ENCODE measurements at regions of chr6 and their contacts with region 1.

Region 1: GRCh38 chr6:134174672-134175198 is 122.3 kb upstream of the SLC2A12 start:
- DNase-seq: peak; percentile 95
- ATAC-seq: peak; percentile 85 to 96 (median 91)
- H3K4me3 ChIP-seq: peak overlapping the region; percentile 66 to 85 (median 78)
- H3K27ac ChIP-seq: peak overlapping the region; percentile 97 to 100 (median 98)
- H3K4me1 ChIP-seq: peaks cover 2 to 77% (median 59%) of the 10 kb centered on the region in 9 donors
- H3K27me3 ChIP-seq: no peaks in the 10 kb centered on the region
- CTCF ChIP-seq: peak in 1 of 9 donors; percentile 1

Region 2: DNA sequence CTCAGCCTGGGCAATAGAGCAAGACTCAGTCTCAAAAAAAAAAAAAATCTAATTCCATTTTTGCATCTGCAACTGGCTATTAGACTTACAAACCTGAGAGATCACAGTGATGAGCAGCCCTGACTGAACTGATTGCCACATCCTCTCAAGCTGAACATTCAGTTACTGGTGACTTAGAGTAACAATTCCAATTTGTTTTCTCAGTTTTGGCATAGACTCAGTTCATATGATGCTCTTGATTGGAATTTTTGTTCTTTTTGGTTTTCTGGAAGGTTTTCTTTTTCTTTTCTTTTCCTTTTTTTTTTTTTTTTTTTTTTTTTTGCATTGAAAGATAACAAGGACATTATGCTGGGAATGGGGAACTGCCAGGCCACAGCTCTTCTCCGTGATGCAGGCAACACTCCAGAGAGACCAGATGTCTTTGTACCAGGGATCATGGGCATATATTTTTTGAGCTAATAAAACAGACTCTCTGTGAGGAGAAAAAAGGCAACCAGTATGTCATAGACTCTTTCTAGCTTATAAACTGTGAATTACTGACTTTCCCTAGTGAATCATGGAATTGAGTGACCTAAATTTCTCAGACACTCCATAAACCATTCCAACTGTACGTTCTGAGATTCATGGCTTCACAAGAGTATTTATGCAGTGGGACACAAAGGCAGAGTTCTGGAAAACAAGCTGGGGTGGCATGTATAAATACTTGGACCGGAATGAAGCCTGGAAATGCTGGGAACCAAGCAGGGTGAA is 36.3 kb before region 1 on chr6:
- intact Hi-C with region 1: no loop called
- DNase-seq: no peak
- ATAC-seq: no peak
- H3K4me3 ChIP-seq: no peak overlapping the region
- H3K27ac ChIP-seq: no peak overlapping the region
- H3K4me1 ChIP-seq: no peaks in the 10 kb centered on the region
- H3K27me3 ChIP-seq: no peaks in the 10 kb centered on the region
- CTCF ChIP-seq: no peak

Region 3: GRCh38 chr6:134347916-134348805 is 173.4 kb after region 1 on chr6:
- intact Hi-C with region 1: loop called in 4 of 10 experiments (anchors 2 to 10 kb)
- DNase-seq: peak in 1 of 2 donors; percentile 20
- ATAC-seq: peak in 4 of 8 donors; percentile 33 to 84 (median 42)
- H3K4me3 ChIP-seq: no peak overlapping the region
- H3K27ac ChIP-seq: peak overlapping the region in 6 of 10 donors; percentile 25 to 94 (median 42)
- H3K4me1 ChIP-seq: peaks cover 0 to 39% (median 17%) of the 10 kb centered on the region in 9 donors
- H3K27me3 ChIP-seq: no peaks in the 10 kb centered on the region
- CTCF ChIP-seq: no peak

Region 4: DNA sequence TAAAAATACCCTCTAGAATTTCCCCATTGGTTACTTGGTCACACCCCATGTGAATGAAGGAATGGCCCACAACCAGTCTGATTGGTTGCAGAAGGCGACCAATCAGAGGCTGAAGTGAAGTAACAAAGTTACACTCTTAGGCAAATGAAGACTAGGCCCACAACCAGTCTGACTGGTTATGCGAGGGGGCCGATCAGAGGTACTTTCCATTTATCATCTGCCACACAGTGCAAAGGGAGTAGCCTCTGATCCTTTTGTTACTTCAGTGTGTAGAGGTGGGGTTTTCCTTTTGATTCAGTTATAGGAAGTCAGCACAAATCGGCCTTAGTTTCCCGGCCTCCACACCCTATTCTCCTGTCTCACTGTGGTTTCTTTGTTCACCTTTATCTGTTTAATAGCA is 204.4 kb after region 1 on chr6:
- intact Hi-C with region 1: no loop called
- DNase-seq: peak in 1 of 2 donors; percentile 8
- ATAC-seq: peak in 7 of 8 donors; percentile 16 to 86 (median 58)
- H3K4me3 ChIP-seq: no peak overlapping the region
- H3K27ac ChIP-seq: peak overlapping the region in 7 of 10 donors; percentile 11 to 60 (median 34)
- H3K4me1 ChIP-seq: peaks cover 0 to 20% (median 4%) of the 10 kb centered on the region in 9 donors
- H3K27me3 ChIP-seq: no peaks in the 10 kb centered on the region
- CTCF ChIP-seq: no peak

Region 5: GRCh38 chr6:134480593-134480992 is 305.9 kb after region 1 on chr6:
- intact Hi-C with region 1: loop called in 1 of 10 experiments (anchors 10 kb)
- DNase-seq: no peak
- ATAC-seq: peak in 2 of 8 donors; percentile 28 to 70
- H3K4me3 ChIP-seq: no peak overlapping the region
- H3K27ac ChIP-seq: peak overlapping the region in 1 of 10 donors; percentile 10
- H3K4me1 ChIP-seq: peaks cover 0 to 38% (median 16%) of the 10 kb centered on the region in 9 donors
- H3K27me3 ChIP-seq: no peaks in the 10 kb centered on the region
- CTCF ChIP-seq: no peak

Region 6: GRCh38 chr6:134537146-134537555 is 362.4 kb after region 1 on chr6:
- intact Hi-C with region 1: loop called in 4 of 10 experiments (anchors 5 to 10 kb)
- DNase-seq: no peak
- ATAC-seq: no peak
- H3K4me3 ChIP-seq: no peak overlapping the region
- H3K27ac ChIP-seq: no peak overlapping the region
- H3K4me1 ChIP-seq: peaks cover 0 to 48% (median 16%) of the 10 kb centered on the region in 9 donors
- H3K27me3 ChIP-seq: no peaks in the 10 kb centered on the region
- CTCF ChIP-seq: no peak

Region 7: GRCh38 chr6:134707342-134708031 is 532.8 kb after region 1 on chr6:
- intact Hi-C with region 1: loop called in 1 of 10 experiments (anchors 10 kb)
- DNase-seq: no peak
- ATAC-seq: peak in 1 of 8 donors; percentile 29
- H3K4me3 ChIP-seq: no peak overlapping the region
- H3K27ac ChIP-seq: no peak overlapping the region
- H3K4me1 ChIP-seq: no peaks in the 10 kb centered on the region
- H3K27me3 ChIP-seq: no peaks in the 10 kb centered on the region
- CTCF ChIP-seq: no peak

Region 8: GRCh38 chr6:134882426-134883038 is 707.8 kb after region 1 on chr6:
- intact Hi-C with region 1: loop called in 5 of 10 experiments (anchors 1 to 5 kb)
- DNase-seq: peak; percentile 34 to 38
- ATAC-seq: peak in 6 of 8 donors; percentile 51 to 79 (median 61)
- H3K4me3 ChIP-seq: no peak overlapping the region
- H3K27ac ChIP-seq: no peak overlapping the region
- H3K4me1 ChIP-seq: peaks cover 0 to 9% (median 0%) of the 10 kb centered on the region in 9 donors
- H3K27me3 ChIP-seq: peaks cover 0 to 7% (median 0%) of the 10 kb centered on the region in 7 donors
- CTCF ChIP-seq: peak; percentile 61 to 96 (median 94)

Measured in heart right ventricle (tissue), 16 donors.